CD4-positive, alpha-beta T cell (primary cell): ENCODE measurements at regions of chr5 and their contacts with region 1.

Region 1: DNA sequence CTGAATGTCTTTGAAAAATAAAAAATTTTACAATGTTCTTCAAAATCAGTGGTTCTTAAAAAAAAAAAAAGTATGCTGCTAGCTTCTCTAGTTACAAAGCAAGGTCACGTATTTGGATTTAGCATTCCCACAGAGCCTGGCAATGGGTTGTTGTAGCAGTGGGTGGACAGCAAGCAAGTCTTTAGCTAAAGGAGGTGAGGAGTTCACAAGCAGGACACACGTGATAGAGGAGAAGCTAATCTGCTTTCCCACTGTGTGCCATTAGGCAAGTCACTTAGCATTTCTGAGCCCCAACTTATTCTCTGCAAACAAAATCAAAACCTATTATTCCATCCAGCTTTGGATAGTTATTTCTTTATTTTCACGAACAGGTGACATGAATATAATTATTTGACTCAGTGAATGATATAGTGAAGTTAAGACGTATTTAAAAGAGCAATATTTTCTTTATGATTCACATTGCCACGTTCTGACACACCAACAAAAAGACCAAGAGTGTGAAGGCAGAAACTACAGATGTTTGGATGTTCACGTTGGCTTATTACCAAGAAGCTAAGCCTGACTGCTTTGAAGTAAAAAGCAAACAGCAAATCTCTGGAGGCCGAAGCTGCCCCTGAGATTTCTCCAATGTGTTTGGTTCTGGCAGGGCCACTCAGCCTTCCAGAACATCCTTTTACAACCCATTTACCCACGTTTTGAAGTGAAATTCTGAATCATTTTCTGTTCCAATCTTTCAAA is 612.1 kb upstream of the CDH6 start:
- DNase-seq: no peak
- ATAC-seq: no peak
- H3K4me3 ChIP-seq: no peak overlapping the region
- H3K4me3 Mint-ChIP-seq: no peak overlapping the region
- H3K27ac ChIP-seq: no peak overlapping the region
- H3K27ac Mint-ChIP-seq: no peak overlapping the region
- H3K4me1 ChIP-seq: no peaks in the 10 kb centered on the region
- H3K4me1 Mint-ChIP-seq: no peaks in the 10 kb centered on the region
- H3K27me3 ChIP-seq: no peaks in the 10 kb centered on the region
- H3K27me3 Mint-ChIP-seq: no peaks in the 10 kb centered on the region
- CTCF ChIP-seq: no peak

Region 2: DNA sequence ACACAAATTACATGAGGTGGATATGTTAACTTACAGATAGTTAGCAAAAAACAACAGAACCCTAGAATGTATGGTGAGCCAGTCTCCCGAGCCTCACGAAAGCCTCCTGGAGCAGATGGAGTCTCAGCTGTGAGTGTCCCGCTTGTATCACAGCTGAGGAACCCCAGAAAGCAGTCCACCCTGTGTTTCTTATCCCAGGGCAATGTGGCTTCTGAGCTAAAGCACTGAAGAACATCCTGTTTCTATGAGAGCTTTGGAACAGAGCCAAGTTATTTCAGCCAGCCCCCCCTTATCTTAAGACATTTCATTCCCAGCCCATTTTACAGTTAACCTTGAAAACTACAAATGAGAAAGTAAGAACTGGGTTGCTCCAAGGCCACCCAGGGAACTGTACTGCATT is 608.8 kb before region 1 on chr5:
- CTCF ChIA-PET with region 1: no interaction called
- POLR2A ChIA-PET with region 1: no interaction called
- intact Hi-C with region 1: loop called in 1 of 2 experiments (anchors 10 kb)
- DNase-seq: no peak
- ATAC-seq: no peak
- H3K4me3 ChIP-seq: no peak overlapping the region
- H3K4me3 Mint-ChIP-seq: no peak overlapping the region
- H3K27ac ChIP-seq: no peak overlapping the region
- H3K27ac Mint-ChIP-seq: no peak overlapping the region
- H3K4me1 ChIP-seq: no peaks in the 10 kb centered on the region
- H3K4me1 Mint-ChIP-seq: no peaks in the 10 kb centered on the region
- H3K27me3 ChIP-seq: no peaks in the 10 kb centered on the region
- H3K27me3 Mint-ChIP-seq: no peaks in the 10 kb centered on the region
- CTCF ChIP-seq: no peak

Region 3: GRCh38 chr5:30561771-30562170 is 19.6 kb before region 1 on chr5:
- CTCF ChIA-PET with region 1: no interaction called
- POLR2A ChIA-PET with region 1: no interaction called
- intact Hi-C with region 1: no loop called
- DNase-seq: no peak
- ATAC-seq: no peak
- H3K4me3 ChIP-seq: no peak overlapping the region
- H3K4me3 Mint-ChIP-seq: no peak overlapping the region
- H3K27ac ChIP-seq: no peak overlapping the region
- H3K27ac Mint-ChIP-seq: no peak overlapping the region
- H3K4me1 ChIP-seq: no peaks in the 10 kb centered on the region
- H3K4me1 Mint-ChIP-seq: no peaks in the 10 kb centered on the region
- H3K27me3 ChIP-seq: no peaks in the 10 kb centered on the region
- H3K27me3 Mint-ChIP-seq: no peaks in the 10 kb centered on the region
- CTCF ChIP-seq: no peak

Region 4: GRCh38 chr5:30592833-30593232 is 11.5 kb after region 1 on chr5:
- CTCF ChIA-PET with region 1: no interaction called
- POLR2A ChIA-PET with region 1: no interaction called
- intact Hi-C with region 1: loop called in 1 of 2 experiments (anchors 1 kb)
- DNase-seq: no peak
- ATAC-seq: no peak
- H3K4me3 ChIP-seq: no peak overlapping the region
- H3K4me3 Mint-ChIP-seq: no peak overlapping the region
- H3K27ac ChIP-seq: no peak overlapping the region
- H3K27ac Mint-ChIP-seq: no peak overlapping the region
- H3K4me1 ChIP-seq: no peaks in the 10 kb centered on the region
- H3K4me1 Mint-ChIP-seq: no peaks in the 10 kb centered on the region
- H3K27me3 ChIP-seq: no peaks in the 10 kb centered on the region
- H3K27me3 Mint-ChIP-seq: no peaks in the 10 kb centered on the region
- CTCF ChIP-seq: no peak

Region 5: GRCh38 chr5:30650311-30650710 is 68.9 kb after region 1 on chr5:
- CTCF ChIA-PET with region 1: no interaction called
- POLR2A ChIA-PET with region 1: no interaction called
- intact Hi-C with region 1: no loop called
- DNase-seq: no peak
- ATAC-seq: no peak
- H3K4me3 ChIP-seq: no peak overlapping the region
- H3K4me3 Mint-ChIP-seq: no peak overlapping the region
- H3K27ac ChIP-seq: no peak overlapping the region
- H3K27ac Mint-ChIP-seq: no peak overlapping the region
- H3K4me1 ChIP-seq: no peaks in the 10 kb centered on the region
- H3K4me1 Mint-ChIP-seq: no peaks in the 10 kb centered on the region
- H3K27me3 ChIP-seq: no peaks in the 10 kb centered on the region
- H3K27me3 Mint-ChIP-seq: no peaks in the 10 kb centered on the region
- CTCF ChIP-seq: no peak